ENCODE measurements at regions of chr1 and their contacts with region 1.

Region 1: GRCh38 chr1:203340112-203340804 is 10.7 kb downstream of the FMOD start:
- DNase-seq: peak; percentile 76
- ATAC-seq: peak; percentile 76
- H3K4me3 ChIP-seq: no peak overlapping the region
- H3K27ac ChIP-seq: no peak overlapping the region
- H3K4me1 ChIP-seq: peaks cover 0 to 6% of the 10 kb centered on the region in 2 experiments; a peak in 2 of 4 replicates
- H3K27me3 ChIP-seq: peaks cover 15% of the 10 kb centered on the region; the same call in 1 of the 2 replicates
- CTCF ChIP-seq: peak; percentile 88 to 96 (median 94)
- POLR2A ChIP-seq: no peak
- RAD21 ChIP-seq: peak; percentile 95

Region 2: GRCh38 chr1:203440771-203441170 is 100.5 kb after region 1 on chr1:
- CTCF ChIA-PET with region 1: interaction called, 13 read pairs
- POLR2A ChIA-PET with region 1: no interaction called
- RAD21 ChIA-PET with region 1: interaction called, 3 to 6 read pairs
- intact Hi-C with region 1: loop called (anchors 2 kb)
- DNase-seq: no peak
- ATAC-seq: peak; percentile 84
- H3K4me3 ChIP-seq: no peak overlapping the region
- H3K27ac ChIP-seq: no peak overlapping the region
- H3K4me1 ChIP-seq: no peaks in the 10 kb centered on the region
- H3K27me3 ChIP-seq: peaks cover 24% of the 10 kb centered on the region
- CTCF ChIP-seq: peak; percentile 14 to 59 (median 26); a peak in 3 of 6 replicates
- POLR2A ChIP-seq: no peak
- RAD21 ChIP-seq: peak; percentile 64

Measured in HCT116 (cell line).